Activated naive CD4-positive, alpha-beta T cell treated with anti-CD3 and anti-CD28 coated beads for 36 hours (primary cell): ENCODE measurements at regions of chr7 and their contacts with region 1.

Region 1: DNA sequence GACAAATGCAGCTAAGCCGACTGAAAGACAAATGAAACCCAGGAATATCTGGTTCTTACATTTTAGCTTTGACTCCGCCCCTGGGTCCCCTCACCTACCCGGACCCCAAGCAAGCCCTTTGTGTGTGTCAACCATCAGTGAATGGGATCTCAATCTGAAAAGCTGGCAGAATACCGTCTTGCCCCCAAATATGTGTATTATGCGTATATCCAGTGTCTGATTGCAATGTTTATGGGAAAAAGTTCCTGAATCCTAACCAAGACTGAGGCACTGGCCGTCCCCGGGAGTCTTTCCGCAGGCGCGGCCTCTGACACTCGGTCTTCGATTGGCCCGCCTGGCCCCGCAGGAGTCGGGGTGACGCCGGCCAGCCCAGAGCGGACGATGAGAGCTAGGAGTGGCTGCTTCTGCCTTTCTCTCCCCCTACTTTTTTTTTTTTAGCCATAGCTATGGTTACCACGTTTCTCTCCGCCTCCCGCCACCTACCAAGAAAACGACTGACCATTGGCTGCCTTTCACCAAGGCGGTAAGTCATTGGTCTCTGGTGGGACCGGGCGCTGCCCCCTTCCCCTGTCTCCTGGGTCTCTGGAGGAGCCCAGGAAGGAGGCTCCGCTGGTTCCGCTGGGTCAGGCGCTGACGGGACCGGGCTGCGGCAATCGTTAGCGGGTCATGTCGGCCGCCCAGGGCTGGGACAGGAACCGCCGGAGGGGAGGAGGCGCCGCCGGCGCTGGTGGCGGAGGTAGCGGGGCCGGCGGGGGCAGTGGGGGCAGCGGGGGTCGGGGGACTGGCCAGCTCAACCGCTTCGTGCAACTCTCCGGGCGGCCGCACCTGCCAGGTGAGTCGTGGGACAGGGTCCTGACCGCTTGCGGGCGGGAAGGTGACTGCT is at the start of gene KLHDC10:
- DNase-seq: peak; percentile 98
- H3K4me3 Mint-ChIP-seq: peak within 1 kb of the TSS; percentile 79
- H3K27ac Mint-ChIP-seq: peak within 1 kb of the TSS; percentile 70
- H3K4me1 Mint-ChIP-seq: peaks cover 38% of the 10 kb centered on the region
- H3K27me3 Mint-ChIP-seq: no peaks in the 10 kb centered on the region
- total RNA-seq, gene KLHDC10: 11.6 to 12.9 TPM

Region 2: GRCh38 chr7:130050773-130051125 is 19.5 kb before region 1 on chr7:
- CTCF ChIA-PET with region 1: interaction called, 7 read pairs
- intact Hi-C with region 1: loop called (anchors 1 kb)
- DNase-seq: no peak
- H3K4me3 Mint-ChIP-seq: peak overlapping the region; percentile 98
- H3K27ac Mint-ChIP-seq: peak overlapping the region; percentile 92
- H3K4me1 Mint-ChIP-seq: peaks cover 16% of the 10 kb centered on the region
- H3K27me3 Mint-ChIP-seq: no peaks in the 10 kb centered on the region

Region 3: DNA sequence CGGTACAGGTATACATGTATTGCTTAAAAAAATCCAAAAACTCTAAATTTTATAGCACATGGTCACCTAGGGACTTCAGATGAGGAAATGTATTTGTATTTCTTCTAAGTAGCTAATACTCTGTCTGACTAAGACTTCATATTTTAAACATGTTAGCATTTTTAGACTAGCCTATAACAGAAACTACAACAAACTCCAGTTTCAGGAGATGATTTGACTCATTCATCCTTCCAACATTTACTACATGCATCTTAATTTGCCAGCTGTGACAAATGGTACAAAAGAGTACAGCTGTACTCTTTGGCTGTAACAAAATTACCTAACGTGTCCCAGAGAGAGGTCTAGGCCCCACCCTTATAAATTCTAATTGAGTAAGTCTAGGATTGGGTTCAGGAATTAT is 112.8 kb after region 1 on chr7:
- CTCF ChIA-PET with region 1: interaction called, 7 read pairs
- intact Hi-C with region 1: loop called (anchors 2 kb)
- DNase-seq: no peak
- H3K4me3 Mint-ChIP-seq: no peak overlapping the region
- H3K27ac Mint-ChIP-seq: peak overlapping the region; percentile 65
- H3K4me1 Mint-ChIP-seq: peaks cover 30% of the 10 kb centered on the region
- H3K27me3 Mint-ChIP-seq: no peaks in the 10 kb centered on the region

Region 4: GRCh38 chr7:130277763-130278643 is 207.8 kb after region 1 on chr7:
- CTCF ChIA-PET with region 1: no interaction called
- intact Hi-C with region 1: loop called (anchors 1 kb)
- DNase-seq: no peak
- H3K4me3 Mint-ChIP-seq: no peak overlapping the region
- H3K27ac Mint-ChIP-seq: peak overlapping the region; percentile 85
- H3K4me1 Mint-ChIP-seq: peaks cover 44% of the 10 kb centered on the region
- H3K27me3 Mint-ChIP-seq: no peaks in the 10 kb centered on the region

Region 5: DNA sequence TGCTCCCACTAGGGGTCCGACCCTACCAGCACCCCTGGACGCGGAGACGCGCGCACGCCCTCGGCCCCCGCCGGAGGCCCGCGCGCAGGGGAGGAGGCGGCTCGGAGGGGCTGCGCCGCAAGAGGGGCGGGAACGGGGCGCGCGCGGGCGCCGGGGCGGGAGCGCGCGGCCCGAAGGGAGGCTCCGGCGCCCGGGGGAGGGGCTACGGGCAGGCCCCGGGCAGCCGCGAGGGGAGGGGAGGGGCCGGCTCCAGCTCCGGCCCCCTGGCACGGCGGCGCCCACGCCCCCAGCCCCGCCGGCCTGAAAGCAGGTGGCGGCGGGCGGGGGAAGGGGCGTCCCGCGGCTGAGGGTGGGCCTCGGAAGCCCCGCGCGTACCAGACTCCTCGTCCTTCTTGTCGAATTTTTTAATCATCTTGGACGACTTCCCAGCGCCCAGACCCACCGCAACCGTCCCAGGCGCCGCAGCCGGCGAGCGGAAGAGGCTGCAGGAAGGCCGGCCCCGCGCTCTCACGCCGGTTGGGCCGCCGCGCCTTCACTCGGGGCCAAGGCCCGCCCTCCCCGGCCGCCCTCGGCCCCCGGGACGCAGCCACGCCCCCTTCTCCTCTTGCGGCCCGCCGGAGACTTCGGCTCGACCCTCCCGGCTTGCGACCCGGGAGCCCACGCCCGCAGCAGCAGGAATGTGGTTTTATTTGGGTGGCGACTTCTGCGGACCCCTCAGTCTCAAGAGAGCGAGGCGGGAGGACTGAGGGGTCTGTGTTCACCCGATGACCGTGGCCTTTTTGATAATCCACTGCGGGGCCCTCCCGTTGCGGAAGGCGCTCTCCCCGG is 598.3 kb after region 1 on chr7 and contains the start of gene COPG2:
- CTCF ChIA-PET with region 1: no interaction called
- intact Hi-C with region 1: loop called (anchors 1 kb)
- DNase-seq: peak; percentile 74
- H3K4me3 Mint-ChIP-seq: peak within 1 kb of the TSS; percentile 82
- H3K27ac Mint-ChIP-seq: peak within 1 kb of the TSS; percentile 24
- H3K4me1 Mint-ChIP-seq: peaks cover 14% of the 10 kb centered on the region
- H3K27me3 Mint-ChIP-seq: peaks cover 7% of the 10 kb centered on the region
- total RNA-seq, gene COPG2: 32.7 to 35.7 TPM

Region 6: DNA sequence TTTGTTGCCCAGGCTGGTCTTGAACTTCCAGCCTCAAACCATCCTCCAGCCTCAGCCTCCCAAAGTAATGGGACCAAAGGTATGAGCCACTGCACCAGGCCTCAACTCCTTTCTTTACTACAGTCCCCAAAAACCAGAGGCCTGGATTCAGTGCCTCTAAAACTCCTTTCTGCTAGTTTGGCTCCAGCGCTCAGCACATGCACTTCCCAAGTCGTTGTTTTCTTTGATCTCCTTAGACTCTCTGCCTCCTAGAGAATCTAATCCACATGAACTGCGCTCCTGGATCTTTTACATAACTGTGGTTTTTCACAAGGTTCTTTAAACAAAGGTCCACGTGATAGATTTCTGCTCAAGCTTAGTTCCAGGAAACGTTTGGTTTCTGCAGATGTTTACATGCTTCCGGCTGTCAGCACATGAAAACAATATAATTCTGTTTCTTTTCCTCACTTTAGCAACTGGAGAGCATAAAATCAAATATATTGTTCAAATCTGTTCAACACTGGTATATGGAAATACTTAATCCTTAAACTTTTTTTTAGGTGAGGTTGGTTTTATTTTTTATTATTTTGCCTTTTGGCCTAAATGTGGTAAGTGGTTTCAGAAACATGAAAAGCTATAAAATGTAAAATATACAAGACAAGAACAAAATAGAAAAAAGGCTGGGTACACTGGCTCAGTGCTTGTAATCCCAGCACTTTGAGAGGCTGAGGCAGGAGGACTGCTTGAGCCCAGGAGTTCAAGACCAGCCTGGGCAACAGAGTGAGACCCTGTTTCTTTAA is 987.0 kb after region 1 on chr7:
- CTCF ChIA-PET with region 1: no interaction called
- intact Hi-C with region 1: loop called (anchors 1 kb)
- DNase-seq: peak; percentile 43
- H3K4me3 Mint-ChIP-seq: peak overlapping the region; percentile 66
- H3K27ac Mint-ChIP-seq: peak overlapping the region; percentile 98
- H3K4me1 Mint-ChIP-seq: peaks cover 65% of the 10 kb centered on the region
- H3K27me3 Mint-ChIP-seq: no peaks in the 10 kb centered on the region